ENCODE measurements at regions of chr2 and their contacts with region 1.

Region 1: DNA sequence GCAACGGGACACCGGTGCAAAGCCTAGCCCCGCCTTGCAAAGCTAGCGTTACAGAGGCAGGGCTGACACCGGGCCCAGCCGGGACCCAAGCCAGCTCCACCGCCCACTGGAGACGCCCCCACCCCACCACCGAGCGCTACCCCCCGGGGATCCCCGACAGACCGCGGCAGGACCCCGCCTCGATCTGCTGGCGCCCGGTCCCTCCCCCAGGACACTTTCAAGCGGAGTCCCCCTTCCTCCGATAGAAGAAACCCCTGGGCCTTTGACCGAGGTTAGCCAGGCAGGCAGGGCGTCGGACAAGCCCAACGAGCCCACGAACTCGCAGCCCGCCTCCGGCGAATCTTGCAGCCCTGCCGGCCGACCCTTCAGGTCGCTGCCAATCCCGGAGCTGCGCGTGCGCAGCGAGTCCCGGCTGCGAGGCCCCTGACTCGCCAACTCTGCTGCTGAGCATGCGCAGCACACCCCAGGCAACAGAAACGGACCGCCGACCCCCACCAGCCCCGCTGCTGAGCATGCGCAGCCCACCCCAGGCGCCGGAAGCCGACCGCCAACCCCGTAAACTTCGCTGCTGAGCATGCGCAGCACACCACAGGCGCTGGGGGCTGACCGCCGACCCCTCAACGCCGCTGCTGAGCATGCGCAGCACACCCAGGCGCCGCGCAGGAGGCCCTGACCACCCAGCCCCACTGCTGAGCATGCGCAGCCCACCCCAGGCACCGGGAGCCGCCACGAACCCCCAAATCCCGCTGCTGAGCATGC is 656 bp downstream of the ADI1 start:
- DNase-seq: peak; percentile 91 to 99 (median 94)

Region 2: DNA sequence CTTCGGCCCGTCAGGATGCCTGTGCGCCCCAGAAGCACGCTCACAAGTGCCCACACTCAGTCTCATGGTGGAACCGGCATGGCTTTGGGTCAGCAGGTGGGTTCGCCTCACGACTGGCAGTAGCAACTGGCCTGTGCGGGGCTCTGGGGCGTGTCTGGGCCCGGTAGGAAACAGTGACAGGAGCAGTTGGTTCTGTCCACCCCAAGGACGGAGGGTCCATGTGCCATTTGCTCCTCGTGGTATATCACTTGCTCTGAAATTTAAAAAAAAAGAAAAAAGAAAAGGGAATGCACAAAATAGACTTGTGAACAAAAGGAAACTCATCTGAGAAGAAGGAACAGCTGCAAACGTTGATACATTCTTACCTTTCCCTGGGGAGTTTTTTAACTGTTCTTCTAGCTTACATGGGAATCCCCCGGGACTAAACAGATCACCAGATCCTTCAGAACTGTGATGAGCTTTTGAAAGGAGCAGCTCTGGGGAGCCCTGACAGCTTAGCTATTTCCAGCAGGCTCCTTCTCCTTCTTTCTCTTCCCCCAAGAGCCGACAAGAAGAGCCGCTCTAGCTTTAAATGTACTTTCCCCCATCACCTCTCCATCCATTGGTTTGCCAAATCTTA is 96.4 kb before region 1 on chr2:
- intact Hi-C with region 1: no loop called
- DNase-seq: no peak

Region 3: DNA sequence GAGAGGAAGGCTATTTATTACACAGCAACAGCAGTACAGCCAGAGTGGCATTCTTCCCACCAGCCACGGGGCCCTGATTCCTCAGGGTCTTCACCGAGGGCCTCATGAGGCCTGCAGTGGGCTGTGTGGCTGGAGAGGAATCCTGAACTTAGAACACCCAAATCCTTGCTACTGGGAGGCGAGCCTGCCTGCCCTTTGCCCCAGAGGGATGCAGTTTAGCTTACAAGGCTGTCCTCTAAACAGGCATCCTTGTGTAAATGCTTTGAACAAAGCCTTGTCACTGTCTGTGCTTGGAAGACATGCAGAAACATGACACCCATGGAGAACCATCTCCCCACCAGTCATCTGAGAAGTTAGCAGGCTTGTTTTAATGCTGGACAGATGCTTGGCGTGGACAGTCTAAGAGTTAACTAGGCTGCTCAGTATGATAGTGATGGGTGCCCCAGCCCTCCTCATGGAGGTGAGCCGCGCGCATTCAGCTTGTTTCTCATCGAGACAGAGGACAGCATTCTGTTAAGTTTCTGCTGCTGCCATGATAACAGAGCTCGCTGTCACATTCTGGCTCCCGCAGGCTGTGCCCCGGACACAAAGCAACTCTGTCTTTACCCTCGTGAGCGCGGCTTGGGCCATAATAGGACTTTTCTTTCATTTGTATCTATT is 42.2 kb before region 1 on chr2:
- intact Hi-C with region 1: loop called (anchors 5 kb)
- DNase-seq: peak in 7 of 10 donors; percentile 45 to 95 (median 69)